ENCODE measurements at regions of chr1 and their contacts with region 1.

Region 1: DNA sequence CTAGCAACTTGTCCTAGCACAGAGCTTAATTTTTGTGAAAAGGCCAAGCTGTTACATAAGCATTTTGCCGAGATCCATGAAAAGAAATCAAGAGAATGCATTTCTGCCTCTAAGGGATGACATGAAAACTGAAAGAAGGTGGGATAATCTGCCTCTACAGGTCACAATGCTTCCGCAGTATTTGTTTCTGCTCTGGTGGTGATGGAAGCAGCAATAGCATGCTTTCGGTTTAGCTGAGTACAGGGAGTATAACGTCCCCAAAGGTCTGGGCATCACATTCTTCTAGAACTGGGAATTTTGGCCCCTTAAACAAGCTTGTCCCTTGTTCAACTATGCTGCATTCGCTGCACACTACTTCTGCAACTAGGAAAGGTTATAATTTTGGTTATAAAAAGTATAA is 14.4 kb upstream of the MAGI3 start:
- DNase-seq: no peak
- H3K4me3 ChIP-seq: no peak overlapping the region
- H3K27ac ChIP-seq: no peak overlapping the region
- H3K4me1 ChIP-seq: no peaks in the 10 kb centered on the region
- H3K27me3 ChIP-seq: peaks cover 10% of the 10 kb centered on the region
- CTCF ChIP-seq: no peak

Region 2: DNA sequence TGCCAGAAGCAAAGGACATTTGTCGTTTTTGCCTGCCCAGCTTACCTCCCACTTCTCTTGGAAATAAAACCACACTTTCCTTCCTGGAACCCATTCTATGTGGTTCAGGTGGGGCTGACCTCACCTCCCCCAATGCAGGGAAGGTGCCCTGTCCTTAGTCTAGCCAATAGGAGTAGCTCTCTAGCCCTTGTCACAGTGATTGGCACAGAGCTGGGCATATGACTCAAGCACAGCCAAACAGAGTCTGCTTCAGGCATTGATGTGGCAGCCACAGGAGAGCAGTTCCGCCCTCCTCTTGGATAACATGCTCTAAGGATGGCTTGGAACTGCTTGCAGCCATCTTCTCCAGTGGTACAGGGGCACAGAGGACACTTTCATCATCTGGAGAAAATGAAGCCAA is 168.9 kb before region 1 on chr1:
- CTCF ChIA-PET with region 1: no interaction called
- POLR2A ChIA-PET with region 1: no interaction called
- intact Hi-C with region 1: no loop called
- DNase-seq: no peak
- H3K4me3 ChIP-seq: no peak overlapping the region
- H3K27ac ChIP-seq: no peak overlapping the region
- H3K4me1 ChIP-seq: no peaks in the 10 kb centered on the region
- H3K27me3 ChIP-seq: no peaks in the 10 kb centered on the region
- CTCF ChIP-seq: no peak

Region 3: GRCh38 chr1:113325039-113325438 is 50.8 kb before region 1 on chr1:
- CTCF ChIA-PET with region 1: no interaction called
- POLR2A ChIA-PET with region 1: no interaction called
- intact Hi-C with region 1: loop called (anchors 10 kb)
- DNase-seq: no peak
- H3K4me3 ChIP-seq: no peak overlapping the region
- H3K27ac ChIP-seq: no peak overlapping the region
- H3K4me1 ChIP-seq: no peaks in the 10 kb centered on the region
- H3K27me3 ChIP-seq: no peaks in the 10 kb centered on the region
- CTCF ChIP-seq: no peak

Region 4: GRCh38 chr1:113734357-113735055 is 358.6 kb after region 1 on chr1:
- CTCF ChIA-PET with region 1: no interaction called
- POLR2A ChIA-PET with region 1: no interaction called
- intact Hi-C with region 1: no loop called
- DNase-seq: no peak
- H3K4me3 ChIP-seq: no peak overlapping the region
- H3K27ac ChIP-seq: no peak overlapping the region
- H3K4me1 ChIP-seq: no peaks in the 10 kb centered on the region
- H3K27me3 ChIP-seq: no peaks in the 10 kb centered on the region
- CTCF ChIP-seq: no peak